PC-3 (cell line): ENCODE measurements at regions of chr5 and their contacts with region 1.

Region 1: DNA sequence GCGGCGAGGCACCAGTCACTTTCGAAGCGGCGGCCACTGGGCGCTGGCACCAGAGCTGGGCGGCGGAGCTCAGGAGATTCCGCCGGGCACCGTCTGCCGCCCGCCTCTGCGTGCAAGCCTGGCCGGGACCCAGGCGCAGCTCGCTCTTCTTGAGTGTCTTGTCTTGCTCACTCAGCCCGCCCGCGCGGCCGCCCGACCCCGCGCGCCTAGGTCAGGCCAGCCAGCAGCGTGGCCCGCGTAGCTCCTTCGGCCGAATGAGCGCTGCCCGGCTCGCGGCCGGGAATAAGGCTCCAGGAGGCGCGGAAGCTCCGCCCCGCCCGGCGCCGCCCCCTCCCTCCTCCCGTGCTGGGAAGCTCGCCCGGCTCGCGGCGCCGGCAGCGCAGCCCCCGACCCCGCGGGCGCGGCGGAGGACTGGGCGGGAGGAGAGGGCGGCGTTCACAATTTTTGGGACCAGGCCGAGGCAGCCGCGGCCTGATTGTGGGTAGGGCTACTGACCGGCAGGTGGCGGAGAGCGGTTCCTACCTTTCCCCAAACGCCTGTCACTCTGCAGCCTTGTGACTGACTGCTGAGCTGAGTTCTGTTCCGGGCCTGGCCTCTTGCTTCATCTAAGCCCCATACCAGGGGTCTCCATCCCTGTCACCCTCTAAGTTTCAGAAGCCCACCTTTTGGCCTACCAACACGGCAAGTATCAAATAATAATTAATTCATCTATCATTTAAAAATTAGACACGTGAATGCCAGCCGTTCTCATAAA is at the start of gene HBEGF:
- DNase-seq: peak; percentile 94
- ATAC-seq: peak; percentile 65
- H3K4me3 ChIP-seq: peak within 1 kb of the TSS; percentile 98
- H3K27ac ChIP-seq: peak within 1 kb of the TSS; percentile 76
- H3K4me1 ChIP-seq: peaks cover 66% of the 10 kb centered on the region
- H3K27me3 ChIP-seq: no peaks in the 10 kb centered on the region
- CTCF ChIP-seq: peak; percentile 58
- total RNA-seq, gene HBEGF: 82.6 and 85.9 TPM in 2 replicates

Region 2: GRCh38 chr5:140112685-140113179 is 233.8 kb before region 1 on chr5:
- CTCF ChIA-PET with region 1: no interaction called
- POLR2A ChIA-PET with region 1: interaction called, 12 read pairs
- intact Hi-C with region 1: no loop called
- DNase-seq: no peak
- ATAC-seq: no peak
- H3K4me3 ChIP-seq: peak overlapping the region; percentile 91; the same call in 1 of the 2 replicates
- H3K27ac ChIP-seq: no peak overlapping the region
- H3K4me1 ChIP-seq: peaks cover 36% of the 10 kb centered on the region
- H3K27me3 ChIP-seq: no peaks in the 10 kb centered on the region
- CTCF ChIP-seq: no peak

Region 3: DNA sequence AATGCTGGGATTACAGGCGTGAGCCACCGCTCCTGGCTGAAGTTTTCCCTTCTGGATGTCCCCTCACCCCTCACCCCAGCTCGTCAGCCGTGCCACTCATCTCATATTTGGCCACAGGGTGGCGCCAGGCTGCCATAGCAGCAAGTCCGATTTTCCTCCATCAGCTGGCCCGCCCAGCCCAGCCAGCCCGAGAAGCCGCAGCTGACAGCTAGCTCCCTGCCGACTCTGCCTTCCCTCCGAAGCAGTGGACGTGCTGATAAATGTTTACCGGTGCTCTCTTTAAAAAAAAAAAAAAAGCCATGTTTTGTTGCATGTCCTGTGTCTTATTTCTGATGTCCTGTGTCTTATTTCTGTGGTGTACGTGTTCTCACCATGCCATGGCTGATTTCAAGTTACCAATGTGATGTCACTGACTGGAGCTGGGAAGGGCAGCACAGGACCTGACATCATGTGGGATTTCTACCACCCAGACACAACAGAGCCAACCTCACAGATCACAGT is 102.0 kb before region 1 on chr5:
- CTCF ChIA-PET with region 1: interaction called, 95 read pairs
- POLR2A ChIA-PET with region 1: interaction called, 14 read pairs
- intact Hi-C with region 1: loop called (anchors 1 kb)
- DNase-seq: peak; percentile 93
- ATAC-seq: peak; percentile 41
- H3K4me3 ChIP-seq: no peak overlapping the region
- H3K27ac ChIP-seq: peak overlapping the region; percentile 90
- H3K4me1 ChIP-seq: peaks cover 55% of the 10 kb centered on the region
- H3K27me3 ChIP-seq: no peaks in the 10 kb centered on the region
- CTCF ChIP-seq: peak; percentile 88

Region 4: DNA sequence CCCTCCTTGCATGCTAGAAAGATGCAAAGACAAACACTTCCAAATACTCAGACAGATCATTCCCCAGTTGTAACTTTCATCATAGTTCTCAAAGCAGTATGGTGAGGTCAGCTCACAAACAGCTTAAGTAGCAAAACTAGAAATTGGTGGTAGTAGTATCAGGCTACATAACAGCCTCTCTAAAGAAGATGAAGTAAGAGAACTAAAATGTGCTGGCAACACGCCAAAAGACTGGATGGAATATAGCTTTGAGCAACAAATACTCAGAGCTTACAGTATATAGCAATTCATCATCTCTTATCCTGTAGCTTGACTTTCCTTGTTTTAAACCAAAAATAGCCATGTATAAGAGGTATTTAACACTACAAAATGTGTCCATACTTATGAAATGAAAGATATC is 51.1 kb before region 1 on chr5:
- CTCF ChIA-PET with region 1: interaction called, 11 read pairs
- POLR2A ChIA-PET with region 1: interaction called, 4 read pairs
- intact Hi-C with region 1: loop called (anchors 2 kb)
- DNase-seq: peak; percentile 96
- ATAC-seq: peak; percentile 52
- H3K4me3 ChIP-seq: no peak overlapping the region
- H3K27ac ChIP-seq: peak overlapping the region; percentile 7; the same call in 1 of the 2 replicates
- H3K4me1 ChIP-seq: peaks cover 82% of the 10 kb centered on the region
- H3K27me3 ChIP-seq: no peaks in the 10 kb centered on the region
- CTCF ChIP-seq: no peak

Region 5: DNA sequence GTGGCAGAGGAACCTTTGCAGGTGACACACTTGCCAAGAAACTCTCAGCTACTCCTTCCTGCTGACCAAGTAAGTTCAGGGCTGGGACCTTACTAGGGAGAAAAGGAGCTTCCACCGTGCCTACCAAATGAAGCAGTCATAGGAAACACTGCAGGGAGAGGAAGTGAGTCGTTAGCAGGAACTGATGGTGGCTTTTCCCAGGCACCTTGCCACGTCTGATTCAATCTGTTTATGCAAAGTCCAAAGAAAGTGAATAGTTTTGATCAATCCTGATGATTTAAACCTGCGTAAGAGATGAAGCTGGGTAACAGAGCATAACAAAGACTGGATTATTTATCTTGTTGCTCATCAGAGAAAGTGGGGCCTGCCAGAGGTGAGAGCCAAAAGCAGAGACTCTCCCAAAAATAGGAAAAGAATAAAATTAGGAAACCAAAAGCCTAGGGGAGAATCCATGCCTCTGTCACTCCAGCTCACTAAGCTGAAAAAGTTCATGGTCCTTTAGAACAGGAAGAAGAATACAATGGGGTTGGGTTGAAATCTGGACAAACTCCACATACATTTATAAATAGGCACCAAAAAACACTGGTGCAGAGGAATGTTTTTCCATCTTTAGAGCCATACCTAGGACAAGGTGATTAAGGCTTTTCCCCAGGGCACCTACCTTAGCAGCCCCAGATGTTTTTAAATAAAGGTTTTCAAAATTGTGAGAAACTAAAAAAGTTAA is 34.3 kb before region 1 on chr5:
- CTCF ChIA-PET with region 1: interaction called, 19 read pairs
- POLR2A ChIA-PET with region 1: interaction called, 21 read pairs
- intact Hi-C with region 1: loop called (anchors 1 kb)
- DNase-seq: peak; percentile 98
- ATAC-seq: peak; percentile 93
- H3K4me3 ChIP-seq: no peak overlapping the region; the same call in 1 of the 2 replicates
- H3K27ac ChIP-seq: peak overlapping the region; percentile 98
- H3K4me1 ChIP-seq: peaks cover 41% of the 10 kb centered on the region
- H3K27me3 ChIP-seq: no peaks in the 10 kb centered on the region
- CTCF ChIP-seq: no peak

Region 6: GRCh38 chr5:140329739-140330481 is 16.6 kb before region 1 on chr5:
- CTCF ChIA-PET with region 1: interaction called, 6 read pairs
- POLR2A ChIA-PET with region 1: interaction called, 12 read pairs
- intact Hi-C with region 1: no loop called
- DNase-seq: no peak
- ATAC-seq: peak; percentile 29
- H3K4me3 ChIP-seq: no peak overlapping the region
- H3K27ac ChIP-seq: no peak overlapping the region
- H3K4me1 ChIP-seq: peaks cover 12% of the 10 kb centered on the region
- H3K27me3 ChIP-seq: no peaks in the 10 kb centered on the region
- CTCF ChIP-seq: no peak

Region 7: DNA sequence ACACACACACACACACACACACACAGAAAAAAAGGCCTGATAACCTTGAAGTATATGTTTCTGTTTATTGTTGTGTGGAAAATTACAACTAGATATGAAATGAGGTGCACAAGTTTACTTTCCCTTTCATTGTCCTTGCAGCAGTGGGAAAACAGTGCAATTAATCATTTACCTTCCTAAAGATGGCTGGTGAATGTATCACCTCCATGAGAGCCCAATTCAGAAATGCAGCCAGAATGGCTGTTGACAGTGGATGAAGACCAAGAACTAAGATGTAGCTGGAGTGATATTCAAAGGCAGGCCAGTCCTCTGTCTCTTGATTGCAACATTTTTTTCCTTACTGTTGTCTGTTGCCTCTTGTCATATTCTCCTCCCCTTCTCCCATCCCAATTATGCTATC is 151.4 kb after region 1 on chr5:
- CTCF ChIA-PET with region 1: no interaction called
- POLR2A ChIA-PET with region 1: no interaction called
- intact Hi-C with region 1: no loop called
- DNase-seq: no peak
- ATAC-seq: no peak
- H3K4me3 ChIP-seq: no peak overlapping the region
- H3K27ac ChIP-seq: no peak overlapping the region
- H3K4me1 ChIP-seq: no peaks in the 10 kb centered on the region
- H3K27me3 ChIP-seq: no peaks in the 10 kb centered on the region
- CTCF ChIP-seq: no peak

Region 8: GRCh38 chr5:140718241-140718580 is 371.7 kb after region 1 on chr5:
- CTCF ChIA-PET with region 1: no interaction called
- POLR2A ChIA-PET with region 1: interaction called, 10 read pairs
- intact Hi-C with region 1: no loop called
- DNase-seq: no peak
- ATAC-seq: no peak
- H3K4me3 ChIP-seq: peak overlapping the region; percentile 68
- H3K27ac ChIP-seq: peak overlapping the region; percentile 74
- H3K4me1 ChIP-seq: no peaks in the 10 kb centered on the region
- H3K27me3 ChIP-seq: no peaks in the 10 kb centered on the region
- CTCF ChIP-seq: no peak